GM18951 (cell line): ENCODE measurements at regions of chr9 and their contacts with region 1.

Region 1: DNA sequence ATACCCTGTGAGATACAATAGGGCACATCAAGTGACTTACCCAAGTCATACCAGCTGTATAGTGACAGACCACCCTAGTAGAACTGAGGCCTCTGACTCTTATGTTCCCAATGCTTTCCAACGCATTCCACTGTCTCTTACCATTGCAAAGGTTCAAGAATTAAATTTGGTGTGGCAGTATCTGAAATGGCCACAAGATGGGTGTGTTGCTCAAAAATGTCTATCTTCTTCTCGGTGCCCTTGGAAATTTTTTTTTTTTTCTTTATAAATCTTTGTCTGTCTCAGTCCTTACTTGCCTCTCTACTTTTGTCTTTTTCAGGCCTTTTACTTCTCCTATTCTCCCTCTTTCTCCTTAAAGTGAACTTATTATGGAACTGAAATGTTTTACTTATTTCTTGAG is 48.4 kb downstream of the GPR21 start:
- POLR2A ChIP-seq: no peak

Region 2: DNA sequence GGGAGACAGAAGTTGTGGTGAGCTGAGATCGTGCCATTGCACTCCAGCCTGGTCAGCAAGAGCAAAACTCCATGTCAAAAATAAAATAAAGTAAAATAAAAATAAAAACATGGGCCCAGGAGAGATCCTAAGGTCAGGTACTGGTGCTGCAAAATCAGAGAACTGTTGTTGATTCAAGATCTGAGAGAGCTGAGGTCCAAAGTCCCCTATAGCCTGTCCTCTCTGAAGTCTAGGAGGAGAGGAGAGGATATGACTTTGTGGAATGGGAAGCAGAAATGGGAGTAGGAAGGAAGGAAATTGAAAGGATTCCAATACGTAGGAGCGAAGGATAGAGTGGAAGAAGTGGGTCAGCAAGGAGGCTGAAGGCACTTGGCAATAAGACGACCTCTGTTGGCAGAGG is 362.6 kb before region 1 on chr9:
- in situ Hi-C with region 1: no loop called
- POLR2A ChIP-seq: no peak

Region 3: DNA sequence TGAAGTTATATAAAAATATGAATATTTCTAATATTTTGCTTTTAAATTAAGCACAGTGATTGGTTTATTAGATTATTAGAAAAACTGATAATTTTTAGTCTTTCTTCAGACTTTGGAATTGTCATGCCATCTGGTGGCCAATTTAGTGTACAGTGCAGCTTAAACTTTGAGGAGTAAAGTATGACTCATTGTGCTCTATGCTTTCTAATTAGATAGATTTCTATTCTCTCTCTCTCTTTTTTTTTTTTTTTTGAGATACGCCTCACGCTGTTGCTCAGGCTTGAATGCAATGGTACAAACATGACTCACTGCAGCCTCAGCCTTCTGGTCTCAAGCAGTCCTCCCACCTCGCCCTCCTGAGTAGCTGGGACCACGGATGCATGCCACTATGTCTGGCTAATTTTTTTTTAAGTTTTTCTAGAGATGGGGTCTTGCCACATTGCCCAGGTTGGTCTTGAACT is 90.4 kb before region 1 on chr9:
- in situ Hi-C with region 1: no loop called
- POLR2A ChIP-seq: no peak

Region 4: DNA sequence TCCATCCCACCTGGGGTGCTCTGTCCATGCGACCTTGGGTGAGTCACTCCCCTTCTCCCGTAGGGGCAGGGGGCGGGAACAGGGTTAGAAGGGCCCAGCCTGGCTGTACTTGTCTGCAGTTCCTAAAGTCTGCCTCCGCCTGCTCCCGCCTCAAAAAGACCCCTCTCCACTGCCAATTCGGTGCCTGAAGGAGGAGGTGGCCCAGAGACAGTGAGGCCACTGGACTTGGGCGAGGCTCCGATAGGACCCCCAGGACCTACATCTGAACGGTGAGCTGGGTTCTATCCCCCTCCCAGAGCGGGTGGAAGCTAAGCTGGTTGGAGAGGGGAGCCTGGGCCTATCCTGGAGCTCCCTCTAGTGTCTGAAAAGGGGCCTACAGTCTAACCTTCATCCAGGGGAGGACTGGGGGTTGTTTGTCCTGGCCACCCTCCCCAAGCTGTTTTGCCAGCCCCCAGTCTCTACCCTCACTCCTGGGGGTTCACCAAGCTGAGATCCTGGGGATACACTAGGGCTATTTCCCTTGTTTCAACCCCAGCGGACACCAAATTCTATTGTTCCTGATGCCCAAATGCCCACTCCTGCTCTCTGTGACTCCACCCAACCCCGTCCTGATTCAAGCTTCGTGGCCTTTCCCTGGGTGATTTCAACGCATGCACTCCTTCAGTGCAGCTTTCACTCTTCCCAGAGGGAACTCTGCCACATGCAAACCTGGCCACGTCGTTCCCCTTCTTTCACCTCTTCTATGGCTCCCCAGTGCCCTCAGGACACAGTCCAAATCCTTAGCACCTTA is 268.1 kb after region 1 on chr9:
- in situ Hi-C with region 1: loop called (anchors 5 kb)
- POLR2A ChIP-seq: no peak

Region 5: GRCh38 chr9:123686131-123686828 is 604.5 kb after region 1 on chr9:
- in situ Hi-C with region 1: no loop called
- POLR2A ChIP-seq: no peak